A549 (cell line): ENCODE measurements at regions of chr20 and their contacts with region 1.

Region 1: DNA sequence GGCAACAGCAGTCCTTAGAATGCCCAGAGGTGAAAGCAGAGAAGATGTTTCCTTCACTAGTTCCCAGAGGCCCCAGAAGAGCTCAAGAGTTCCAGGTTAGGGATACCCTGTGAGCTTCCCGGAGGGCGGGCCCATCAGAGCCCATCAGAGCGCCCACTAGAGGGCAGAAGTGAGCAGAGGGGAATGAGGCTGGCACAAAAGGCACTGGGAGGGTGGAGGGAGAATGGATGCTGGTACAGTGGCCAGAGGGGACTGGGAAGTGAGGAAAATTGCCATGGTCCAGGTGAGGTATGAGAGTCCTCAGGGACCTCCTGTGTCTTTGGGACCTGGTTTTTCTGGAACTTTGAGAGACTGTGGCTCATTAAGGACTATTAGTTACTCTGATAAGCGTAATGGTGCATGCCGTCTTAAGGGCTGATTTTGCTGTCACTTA is 57.3 kb downstream of the LINC00237 start:
- DNase-seq: peak; percentile 50 to 69
- ATAC-seq: peak; percentile 67 to 97; a peak in 4 of 6 replicates
- H3K4me3 ChIP-seq: no peak overlapping the region
- H3K27ac ChIP-seq: no peak overlapping the region
- H3K4me1 ChIP-seq: no peaks in the 10 kb centered on the region
- CTCF ChIP-seq: peak; percentile 55
- EP300 ChIP-seq: no peak
- POLR2A ChIP-seq: no peak
- RAD21 ChIP-seq: peak; percentile 41 to 55; a peak in 3 of 5 replicates

Region 2: GRCh38 chr20:20938131-20938530 is 110.7 kb before region 1 on chr20:
- CTCF ChIA-PET with region 1: no interaction called
- POLR2A ChIA-PET with region 1: no interaction called
- DNase-seq: no peak
- ATAC-seq: no peak
- H3K4me3 ChIP-seq: no peak overlapping the region
- H3K27ac ChIP-seq: no peak overlapping the region
- H3K4me1 ChIP-seq: no peaks in the 10 kb centered on the region
- CTCF ChIP-seq: no peak
- EP300 ChIP-seq: no peak
- POLR2A ChIP-seq: no peak
- RAD21 ChIP-seq: no peak

Region 3: GRCh38 chr20:21031666-21032065 is 17.2 kb before region 1 on chr20:
- CTCF ChIA-PET with region 1: interaction called, 16 read pairs
- POLR2A ChIA-PET with region 1: no interaction called
- DNase-seq: no peak
- ATAC-seq: no peak
- H3K4me3 ChIP-seq: no peak overlapping the region
- H3K27ac ChIP-seq: no peak overlapping the region
- H3K4me1 ChIP-seq: no peaks in the 10 kb centered on the region
- CTCF ChIP-seq: no peak
- EP300 ChIP-seq: no peak
- POLR2A ChIP-seq: no peak
- RAD21 ChIP-seq: no peak

Region 4: DNA sequence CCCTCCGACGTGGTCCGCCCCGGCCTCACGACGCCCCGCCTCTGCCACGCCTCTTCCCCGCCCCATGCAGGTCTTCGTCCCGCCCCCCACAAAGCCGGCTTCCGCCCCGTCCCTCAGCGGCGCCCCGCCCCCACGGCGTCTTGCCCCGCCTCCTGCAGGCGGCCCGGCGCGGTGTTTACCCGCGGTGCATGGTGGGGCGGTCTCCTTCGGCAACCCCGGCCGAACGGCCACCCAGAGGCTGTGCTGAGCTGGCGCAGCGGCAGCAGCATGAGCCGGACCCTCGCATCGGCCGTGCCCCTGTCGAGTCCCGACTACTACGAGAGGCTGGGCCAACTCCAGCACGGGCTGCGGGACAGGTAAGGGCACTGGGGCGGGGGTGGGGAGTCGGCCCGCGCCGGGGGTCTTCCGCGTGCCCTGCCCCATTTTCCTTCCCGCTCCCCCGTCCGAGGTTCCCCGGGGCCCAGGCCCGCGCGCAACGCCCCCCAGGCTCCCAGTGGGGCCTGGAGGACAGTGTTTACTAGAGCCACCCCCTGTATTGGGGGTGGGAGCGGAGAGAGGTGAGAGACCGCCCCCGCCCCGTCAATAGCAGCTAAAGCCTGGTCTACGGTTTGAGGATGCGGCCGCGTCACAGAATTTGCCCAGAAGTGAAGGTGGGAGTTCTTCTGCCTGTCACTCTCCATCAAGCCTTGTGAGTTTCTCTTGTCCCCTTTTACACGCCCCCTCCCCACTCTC is 77.2 kb after region 1 on chr20 and contains the start of gene KIZ:
- CTCF ChIA-PET with region 1: interaction called, 12 read pairs
- POLR2A ChIA-PET with region 1: no interaction called
- DNase-seq: peak; percentile 83 to 97
- ATAC-seq: peak; percentile 94 to 99
- H3K4me3 ChIP-seq: peak within 1 kb of the TSS; percentile 89
- H3K27ac ChIP-seq: peak within 1 kb of the TSS; percentile 82 to 93
- H3K4me1 ChIP-seq: peaks cover 10% of the 10 kb centered on the region
- CTCF ChIP-seq: no peak
- EP300 ChIP-seq: no peak
- POLR2A ChIP-seq: peak; percentile 95
- RAD21 ChIP-seq: peak in 1 of 2 experiments; percentile 12; a peak in 1 of 5 replicates
- polyA plus RNA-seq, gene KIZ: 19.1 and 21.1 TPM in 2 replicates

Region 5: DNA sequence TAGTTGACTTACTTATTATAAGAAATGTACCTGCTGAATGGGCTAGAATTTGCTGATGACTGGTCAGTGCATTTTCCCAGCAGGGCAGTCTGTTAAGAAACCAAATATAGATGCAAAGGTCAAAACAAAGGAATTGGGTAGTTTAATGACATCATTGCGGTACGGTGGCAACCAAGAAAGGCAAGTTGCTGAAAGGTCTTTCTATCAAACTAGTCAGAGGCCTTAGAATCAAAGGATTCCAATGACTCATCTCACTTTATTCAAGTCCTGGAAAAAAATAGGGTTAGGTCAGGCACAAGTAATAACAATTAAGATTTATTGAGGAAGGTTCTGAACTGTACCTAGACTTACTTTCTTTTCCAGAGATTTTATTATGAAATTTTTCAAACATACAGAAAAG is 153.4 kb after region 1 on chr20:
- CTCF ChIA-PET with region 1: no interaction called
- POLR2A ChIA-PET with region 1: no interaction called
- DNase-seq: peak in 1 of 2 experiments; percentile 44
- ATAC-seq: peak in 1 of 2 experiments; percentile 30; a peak in 1 of 6 replicates
- H3K4me3 ChIP-seq: no peak overlapping the region
- H3K27ac ChIP-seq: no peak overlapping the region
- H3K4me1 ChIP-seq: peaks cover 7% of the 10 kb centered on the region; the same call in 1 of the 3 replicates
- CTCF ChIP-seq: no peak
- EP300 ChIP-seq: no peak
- POLR2A ChIP-seq: no peak
- RAD21 ChIP-seq: no peak